ENCODE measurements at regions of chr11 and their contacts with region 1.

Region 1: GRCh38 chr11:14249121-14249963 is 109.6 kb downstream of the RRAS2 start:
- DNase-seq: peak in 2 of 3 donors; percentile 53 to 60
- ATAC-seq: peak; percentile 64 to 82 (median 78)
- H3K4me3 ChIP-seq: no peak overlapping the region
- H3K27ac ChIP-seq: no peak overlapping the region
- H3K4me1 ChIP-seq: no peaks in the 10 kb centered on the region
- H3K27me3 ChIP-seq: no peaks in the 10 kb centered on the region
- CTCF ChIP-seq: peak; percentile 80 to 93 (median 88)
- POLR2A ChIP-seq: no peak

Region 2: DNA sequence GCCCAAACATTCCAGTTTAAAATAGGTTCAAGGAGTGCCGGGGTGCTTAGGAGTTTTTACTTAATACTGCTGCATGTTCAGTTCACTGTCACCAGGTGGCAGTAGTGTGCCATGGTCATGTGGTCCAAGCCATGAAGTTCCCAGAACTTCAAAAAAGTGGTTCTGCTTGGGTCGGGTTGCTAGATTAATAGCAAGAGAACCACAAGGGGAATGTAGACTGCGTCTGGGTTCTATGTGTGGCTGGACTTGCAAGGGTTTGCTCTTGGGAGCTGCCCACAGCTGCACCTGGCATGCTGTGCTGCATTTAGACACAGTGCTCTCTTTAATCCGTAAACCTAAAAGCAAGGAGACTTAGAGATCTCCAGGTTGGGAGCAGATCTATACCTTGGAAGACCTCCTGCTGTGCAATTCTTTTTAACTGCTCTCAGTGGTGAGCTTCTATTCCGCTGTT is 293.3 kb before region 1 on chr11:
- intact Hi-C with region 1: loop called (anchors 5 kb)
- DNase-seq: peak in 2 of 3 donors; percentile 38 to 57
- ATAC-seq: peak; percentile 85 to 93 (median 89)
- H3K4me3 ChIP-seq: no peak overlapping the region
- H3K27ac ChIP-seq: no peak overlapping the region
- H3K4me1 ChIP-seq: no peaks in the 10 kb centered on the region
- H3K27me3 ChIP-seq: peaks cover 0 to 10% of the 10 kb centered on the region in 2 donors
- CTCF ChIP-seq: peak; percentile 85 to 91 (median 88)
- POLR2A ChIP-seq: no peak

Region 3: DNA sequence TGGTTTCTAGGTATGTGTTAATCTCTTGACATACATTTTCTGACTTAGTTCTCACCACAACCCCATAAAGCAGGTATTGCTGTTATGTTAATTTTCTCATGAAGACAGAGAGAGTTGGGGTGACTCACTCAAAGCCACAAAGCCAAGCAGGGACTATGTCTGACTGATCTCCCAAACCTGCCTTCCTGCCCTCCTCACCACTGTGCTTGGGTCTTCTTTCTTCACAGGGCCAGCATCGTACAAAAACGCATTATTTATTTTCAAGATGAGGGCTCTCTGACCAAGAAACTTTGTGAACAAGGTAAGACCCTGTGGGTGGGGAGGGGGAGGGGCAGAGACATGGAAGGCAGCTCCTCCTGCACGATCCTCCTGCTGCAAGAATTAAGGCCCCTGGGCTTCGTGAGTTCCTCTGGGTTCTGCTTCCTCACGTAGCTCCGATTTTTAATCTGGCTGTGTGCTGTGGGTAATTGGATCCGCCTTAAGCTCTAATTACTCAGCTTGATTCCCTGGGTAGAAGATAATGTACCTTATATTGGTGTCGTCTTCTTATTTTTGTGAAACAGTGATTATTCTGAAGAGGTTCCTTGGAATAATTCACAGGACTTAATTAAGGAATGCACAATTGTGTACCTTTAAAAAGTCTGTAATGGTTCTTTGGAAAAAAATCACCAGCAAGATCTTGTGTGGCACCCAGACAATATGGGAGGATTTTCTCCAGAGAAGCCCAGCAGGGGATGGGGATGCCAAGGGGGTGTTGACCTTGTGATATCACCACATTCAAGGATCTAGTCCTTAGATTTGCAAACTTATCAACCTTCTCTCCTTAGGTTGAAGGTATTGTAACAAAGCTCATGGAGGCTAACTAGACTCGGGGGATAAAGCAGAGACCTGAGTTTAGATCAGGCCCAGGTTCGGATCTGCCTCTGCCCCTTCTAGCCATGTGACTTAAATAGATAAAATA is 173.9 kb before region 1 on chr11:
- intact Hi-C with region 1: no loop called
- DNase-seq: no peak
- ATAC-seq: no peak
- H3K4me3 ChIP-seq: no peak overlapping the region
- H3K27ac ChIP-seq: no peak overlapping the region
- H3K4me1 ChIP-seq: no peaks in the 10 kb centered on the region
- H3K27me3 ChIP-seq: no peaks in the 10 kb centered on the region
- CTCF ChIP-seq: no peak
- POLR2A ChIP-seq: no peak

Region 4: DNA sequence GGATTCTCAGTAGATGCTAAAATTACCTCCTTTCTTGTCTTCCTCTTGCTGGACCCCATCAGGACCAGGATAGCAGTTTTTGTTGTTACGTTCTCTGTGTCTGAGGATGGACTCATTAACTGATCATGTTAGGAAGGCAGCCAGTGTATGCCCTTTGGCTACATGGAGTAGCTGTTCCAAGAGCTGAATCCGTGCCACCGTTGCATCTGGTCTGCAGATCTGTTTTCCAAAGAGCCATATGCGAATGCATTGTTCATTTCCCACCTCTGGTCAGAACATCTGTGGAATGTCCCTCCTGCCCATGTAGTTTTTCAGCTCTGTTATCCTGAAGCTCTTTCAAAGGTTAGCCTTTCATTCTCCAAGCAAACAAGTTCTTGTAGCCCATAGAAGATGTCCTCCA is 98.5 kb before region 1 on chr11:
- intact Hi-C with region 1: loop called in 1 of 2 experiments (anchors 10 kb)
- DNase-seq: no peak
- ATAC-seq: no peak
- H3K4me3 ChIP-seq: no peak overlapping the region
- H3K27ac ChIP-seq: no peak overlapping the region
- H3K4me1 ChIP-seq: no peaks in the 10 kb centered on the region
- H3K27me3 ChIP-seq: no peaks in the 10 kb centered on the region
- CTCF ChIP-seq: no peak
- POLR2A ChIP-seq: no peak

Measured in right lobe of liver (tissue), 6 donors.